ENCODE measurements at regions of chr12 and their contacts with region 1.

Region 1: GRCh38 chr12:124388679-124389536 is 94.0 kb downstream of the RFLNA start:
- DNase-seq: peak; percentile 92 to 97
- H3K4me3 ChIP-seq: peak overlapping the region; percentile 59 to 64
- H3K27ac ChIP-seq: peak overlapping the region; percentile 90 to 96
- H3K4me1 ChIP-seq: peaks cover 10 to 95% (median 86%) of the 10 kb centered on the region in 4 donors
- H3K27me3 ChIP-seq: no peaks in the 10 kb centered on the region
- CTCF ChIP-seq: peak in 1 of 2 experiments; percentile 11

Region 2: DNA sequence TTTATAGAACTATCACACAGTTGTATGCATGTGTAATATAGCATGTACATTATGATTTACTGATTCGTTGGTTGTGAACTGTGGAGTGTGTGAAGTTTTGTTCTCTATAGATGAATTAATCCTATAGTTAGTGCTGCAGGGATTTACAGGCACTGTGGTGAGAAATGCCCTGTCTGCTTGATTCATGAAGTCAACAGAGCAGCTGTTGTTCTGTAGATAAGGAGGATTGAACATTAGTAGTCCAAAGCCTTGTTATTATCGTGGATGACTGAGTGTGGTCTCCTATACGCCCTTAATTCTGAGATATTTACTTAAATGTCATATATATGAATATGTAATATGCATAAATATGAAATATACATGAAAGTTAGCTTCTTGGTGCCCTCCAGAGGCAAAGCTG is 528.5 kb before region 1 on chr12:
- intact Hi-C with region 1: no loop called
- DNase-seq: no peak
- H3K4me3 ChIP-seq: no peak overlapping the region
- H3K27ac ChIP-seq: no peak overlapping the region
- H3K4me1 ChIP-seq: no peaks in the 10 kb centered on the region
- H3K27me3 ChIP-seq: peaks cover 0 to 18% of the 10 kb centered on the region in 2 donors
- CTCF ChIP-seq: no peak

Region 3: DNA sequence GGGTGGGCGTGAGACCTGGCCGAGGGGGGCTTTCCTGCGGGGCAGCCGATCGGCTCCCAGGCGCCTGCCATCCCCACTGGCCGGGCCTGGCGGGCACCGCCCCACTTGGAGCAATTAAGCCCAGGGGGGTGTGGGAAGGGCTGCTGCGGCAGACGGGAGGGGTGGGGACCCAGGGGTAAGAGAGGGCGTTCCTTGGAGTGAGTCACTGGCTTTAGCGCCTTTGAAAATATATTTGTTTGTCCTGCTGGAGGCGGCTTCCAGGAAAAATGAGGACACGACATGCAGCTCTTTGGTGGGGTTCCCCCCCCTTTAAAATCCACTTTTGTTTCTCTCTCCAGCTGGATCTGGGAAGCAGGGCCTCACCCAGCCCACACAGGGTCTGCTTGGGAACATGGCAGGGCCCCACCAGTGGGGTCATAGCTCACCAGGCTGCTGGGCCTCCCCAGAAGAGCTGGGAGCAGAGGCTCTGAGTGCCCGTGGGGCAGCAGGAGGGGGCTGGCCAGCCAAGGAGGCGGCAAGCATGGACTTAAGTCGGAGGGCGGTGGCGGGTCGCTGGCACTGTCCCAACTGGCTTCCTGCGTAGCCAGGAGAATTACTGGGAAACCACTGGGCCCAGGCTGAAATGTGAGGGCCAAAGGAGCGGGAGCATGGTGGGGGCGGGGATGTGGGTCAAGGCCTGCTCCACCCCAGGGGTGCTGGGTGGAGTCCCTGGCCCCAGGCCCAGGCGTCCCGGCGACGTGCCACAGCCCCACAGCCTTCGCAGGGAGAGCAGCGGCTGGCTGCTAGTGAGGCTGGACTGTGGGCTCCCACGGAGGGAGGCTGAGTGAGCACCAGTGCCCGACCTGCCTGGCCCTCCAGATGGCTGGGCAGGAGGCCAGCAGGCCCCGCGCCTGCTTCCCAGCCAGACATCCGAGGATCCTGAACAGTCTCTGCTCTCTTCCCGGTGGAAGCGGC is 33.9 kb after region 1 on chr12:
- intact Hi-C with region 1: loop called (anchors 5 kb)
- DNase-seq: peak; percentile 92 to 98
- H3K4me3 ChIP-seq: peak overlapping the region; percentile 34 to 47
- H3K27ac ChIP-seq: peak overlapping the region; percentile 83 to 92
- H3K4me1 ChIP-seq: peaks cover 0 to 67% (median 53%) of the 10 kb centered on the region in 4 donors
- H3K27me3 ChIP-seq: no peaks in the 10 kb centered on the region
- CTCF ChIP-seq: no peak